Right ventricle myocardium inferior (tissue), 1 donor: ENCODE measurements at regions of chr5 and their contacts with region 1.

Region 1: GRCh38 chr5:109485030-109485429 is 75.3 kb upstream of the PJA2 start:
- DNase-seq: peak; percentile 83
- ATAC-seq: peak; percentile 62

Region 2: DNA sequence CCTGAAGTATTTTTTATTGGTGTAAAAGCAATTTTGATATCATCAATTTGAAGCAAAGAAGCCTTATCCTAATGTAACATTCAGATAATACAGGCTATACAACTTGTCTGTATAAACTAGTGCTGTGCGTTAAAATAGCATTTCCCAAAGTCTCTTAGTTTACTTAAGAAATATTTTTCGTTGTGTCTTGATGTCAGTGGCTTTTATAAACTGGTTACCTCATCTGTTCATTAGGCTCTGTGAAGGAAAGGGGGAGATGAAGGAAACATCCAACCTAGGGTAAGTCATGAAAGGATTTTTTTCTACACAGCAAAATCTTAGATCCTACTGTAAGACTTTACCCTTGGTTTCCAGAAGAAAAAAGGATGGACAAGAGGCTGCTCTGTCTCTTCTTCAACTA is 348.1 kb before region 1 on chr5:
- intact Hi-C with region 1: no loop called
- DNase-seq: no peak
- ATAC-seq: no peak

Region 3: GRCh38 chr5:109567374-109568044 is 82.5 kb after region 1 on chr5:
- intact Hi-C with region 1: no loop called
- DNase-seq: no peak
- ATAC-seq: peak; percentile 42

Region 4: GRCh38 chr5:109792613-109793012 is 307.6 kb after region 1 on chr5:
- intact Hi-C with region 1: loop called (anchors 10 kb)
- DNase-seq: no peak
- ATAC-seq: no peak